SK-N-SH (cell line): ENCODE measurements at regions of chr5 and their contacts with region 1.

Region 1: GRCh38 chr5:127441799-127442484 is 75.5 kb upstream of the PRRC1 start:
- DNase-seq: peak; percentile 32
- H3K4me3 ChIP-seq: no peak overlapping the region
- H3K27ac ChIP-seq: no peak overlapping the region
- H3K4me1 ChIP-seq: no peaks in the 10 kb centered on the region; a peak in 4 of 4 replicates
- H3K27me3 ChIP-seq: no peaks in the 10 kb centered on the region
- CTCF ChIP-seq: peak; percentile 70
- EP300 ChIP-seq: no peak
- RAD21 ChIP-seq: peak; percentile 75

Region 2: GRCh38 chr5:126837906-126838539 is 603.9 kb before region 1 on chr5:
- CTCF ChIA-PET with region 1: interaction called, 10 read pairs
- POLR2A ChIA-PET with region 1: no interaction called
- DNase-seq: no peak
- H3K4me3 ChIP-seq: no peak overlapping the region
- H3K27ac ChIP-seq: peak overlapping the region in 1 of 2 experiments; percentile 17; a peak in 1 of 4 replicates
- H3K4me1 ChIP-seq: no peaks in the 10 kb centered on the region; a peak in 2 of 4 replicates
- H3K27me3 ChIP-seq: no peaks in the 10 kb centered on the region
- CTCF ChIP-seq: peak; percentile 61
- EP300 ChIP-seq: no peak
- RAD21 ChIP-seq: peak; percentile 76

Region 3: GRCh38 chr5:127290019-127290945 is 151.7 kb before region 1 on chr5 and contains the start of gene MEGF10:
- CTCF ChIA-PET with region 1: interaction called, 15 read pairs
- POLR2A ChIA-PET with region 1: no interaction called
- DNase-seq: peak; percentile 83
- H3K4me3 ChIP-seq: peak within 1 kb of the TSS; percentile 47 to 63
- H3K27ac ChIP-seq: no peak within 1 kb of the TSS
- H3K4me1 ChIP-seq: peaks cover 0 to 8% of the 10 kb centered on the region in 2 experiments; a peak in 1 of 4 replicates
- H3K27me3 ChIP-seq: no peaks in the 10 kb centered on the region
- CTCF ChIP-seq: peak; percentile 87
- EP300 ChIP-seq: no peak
- RAD21 ChIP-seq: peak; percentile 92
- polyA plus RNA-seq, gene MEGF10: 0.67 and 1.1 TPM in 2 replicates